Common myeloid progenitor, CD34-positive (primary cell): ENCODE measurements at regions of chr17 and their contacts with region 1.

Region 1: GRCh38 chr17:29640413-29640812 is 17.7 kb upstream of the CORO6 start:
- DNase-seq: peak in 2 of 3 donors; percentile 32 to 51
- H3K4me3 ChIP-seq: no peak overlapping the region
- H3K27ac ChIP-seq: peak overlapping the region in 1 of 2 experiments; percentile 57
- H3K4me1 ChIP-seq: peaks cover 14 to 50% (median 44%) of the 10 kb centered on the region in 4 experiments
- H3K27me3 ChIP-seq: no peaks in the 10 kb centered on the region

Region 2: GRCh38 chr17:29653995-29654714 is 13.7 kb after region 1 on chr17:
- CTCF ChIA-PET with region 1: interaction called, 30 read pairs
- POLR2A ChIA-PET with region 1: no interaction called
- DNase-seq: no peak
- H3K4me3 ChIP-seq: no peak overlapping the region
- H3K27ac ChIP-seq: no peak overlapping the region
- H3K4me1 ChIP-seq: peaks cover 0 to 2% (median 0%) of the 10 kb centered on the region in 4 experiments
- H3K27me3 ChIP-seq: no peaks in the 10 kb centered on the region

Region 3: DNA sequence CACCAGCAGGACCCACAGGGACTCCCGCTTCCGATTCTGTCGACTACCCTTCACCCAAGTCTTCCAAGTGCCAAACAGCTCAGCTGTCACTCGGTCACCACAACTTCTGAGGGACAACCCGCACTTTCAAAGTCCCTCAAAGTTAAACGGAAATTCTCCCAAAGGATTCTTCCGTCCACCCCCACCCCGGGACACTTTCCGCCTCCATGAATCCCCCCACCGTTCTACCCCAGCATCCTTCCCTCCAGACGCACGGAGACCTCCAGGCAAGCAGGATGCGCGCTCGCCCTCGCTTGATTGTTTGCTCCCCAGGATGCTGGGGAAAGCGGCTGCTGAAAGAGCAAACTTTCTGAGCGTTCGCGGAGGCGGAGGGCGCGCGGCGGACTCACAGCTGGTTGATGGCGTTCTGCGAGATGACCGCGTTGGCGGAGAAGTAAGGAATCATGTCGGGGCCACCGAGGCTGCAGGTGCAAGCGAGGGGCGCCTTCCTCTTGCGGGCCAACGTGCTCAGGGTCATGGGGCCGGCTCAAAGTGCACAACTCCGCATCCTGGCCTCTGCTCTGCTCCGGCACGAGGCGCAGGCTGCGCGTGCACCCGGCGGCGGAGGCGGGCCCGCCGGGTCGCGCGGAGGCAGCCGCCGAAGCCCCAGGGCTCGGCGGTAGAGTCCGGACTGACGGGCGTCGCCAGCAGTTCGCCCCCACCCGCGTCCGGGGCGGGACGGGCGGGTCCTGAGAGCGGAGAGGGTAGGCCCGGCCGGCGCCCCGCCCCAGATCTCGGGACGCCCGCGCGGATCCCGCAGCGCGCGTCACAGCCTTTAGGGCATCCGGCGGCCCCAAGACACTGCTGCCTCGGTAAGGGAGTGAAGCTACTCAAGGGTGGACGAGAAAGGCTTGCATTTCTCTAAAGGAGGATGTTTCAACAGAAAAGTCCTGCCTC is 120.6 kb after region 1 on chr17:
- CTCF ChIA-PET with region 1: interaction called, 15 read pairs
- POLR2A ChIA-PET with region 1: no interaction called
- DNase-seq: peak; percentile 89 to 96 (median 95)
- H3K4me3 ChIP-seq: peak overlapping the region; percentile 73 to 95 (median 79)
- H3K27ac ChIP-seq: peak overlapping the region; percentile 15 to 73
- H3K4me1 ChIP-seq: peaks cover 16 to 47% (median 23%) of the 10 kb centered on the region in 4 experiments
- H3K27me3 ChIP-seq: no peaks in the 10 kb centered on the region

Region 4: DNA sequence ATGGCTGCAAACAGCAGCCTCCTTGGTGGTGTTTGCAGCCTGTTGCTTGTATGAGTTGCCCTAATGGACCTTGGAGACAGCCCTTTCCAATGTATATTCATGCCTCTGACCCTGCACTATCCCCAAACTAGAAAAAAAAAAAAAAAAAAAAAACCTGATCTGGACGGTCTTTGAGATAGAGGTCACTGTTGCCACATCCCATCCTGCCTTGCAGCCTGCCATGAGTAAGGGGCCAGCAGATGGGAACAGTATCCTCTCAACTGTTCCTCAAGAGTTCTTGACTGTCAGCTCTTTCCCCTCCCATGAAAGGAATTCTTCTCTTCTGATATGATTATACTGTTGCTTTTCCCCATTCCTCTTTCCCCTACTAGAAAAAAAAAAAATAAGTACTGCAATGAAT is 137.2 kb after region 1 on chr17:
- CTCF ChIA-PET with region 1: interaction called, 91 read pairs
- POLR2A ChIA-PET with region 1: interaction called, 4 read pairs
- DNase-seq: no peak
- H3K4me3 ChIP-seq: no peak overlapping the region
- H3K27ac ChIP-seq: no peak overlapping the region
- H3K4me1 ChIP-seq: peaks cover 0 to 6% (median 3%) of the 10 kb centered on the region in 4 experiments
- H3K27me3 ChIP-seq: no peaks in the 10 kb centered on the region

Region 5: DNA sequence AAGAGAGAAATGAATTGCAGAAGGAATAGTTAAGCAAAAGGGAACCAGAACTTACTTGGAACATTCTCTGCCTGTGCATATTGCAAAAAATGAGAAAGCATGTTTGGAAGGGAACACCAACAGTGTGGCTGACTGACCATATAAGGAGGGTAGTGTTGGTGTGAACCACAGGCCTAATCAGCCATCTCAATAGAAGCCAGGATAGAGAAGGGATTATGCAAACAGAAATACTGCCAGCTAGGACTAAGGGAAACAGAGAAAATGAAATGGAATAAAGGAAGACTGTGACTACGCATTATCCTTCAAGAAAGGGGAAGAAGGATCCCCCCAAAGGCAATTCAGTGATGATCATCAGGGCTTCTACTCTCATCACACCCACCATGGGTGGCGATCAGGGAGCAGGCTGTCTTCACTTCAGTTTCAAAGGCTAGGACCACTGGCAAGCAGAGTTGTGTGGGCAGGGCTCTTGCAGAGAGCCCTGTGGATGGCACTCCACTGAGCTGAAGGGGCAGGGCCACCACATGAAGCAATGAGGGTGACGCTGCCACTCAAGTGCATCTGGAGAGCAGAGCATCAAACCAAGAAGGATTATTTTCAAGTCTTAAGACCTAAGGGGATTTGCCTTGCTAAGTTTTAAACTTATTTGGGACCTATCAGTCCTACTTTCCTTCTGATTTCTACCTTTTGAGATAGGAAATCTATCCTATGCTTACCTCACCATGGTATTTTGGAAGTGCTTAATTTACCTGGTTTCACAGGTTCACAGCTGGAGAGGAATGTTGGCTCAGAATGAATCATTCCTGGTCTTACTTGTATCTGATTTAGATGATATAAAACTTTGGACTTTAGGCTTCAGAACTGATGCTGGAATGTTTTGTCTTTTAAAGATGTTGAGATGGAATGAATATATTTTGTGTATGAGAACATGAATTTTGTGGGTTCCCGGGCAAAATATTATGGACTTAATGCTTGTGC is 149.1 kb after region 1 on chr17:
- CTCF ChIA-PET with region 1: interaction called, 10 read pairs
- POLR2A ChIA-PET with region 1: no interaction called
- DNase-seq: no peak
- H3K4me3 ChIP-seq: no peak overlapping the region
- H3K27ac ChIP-seq: no peak overlapping the region
- H3K4me1 ChIP-seq: peaks cover 0 to 7% (median 1%) of the 10 kb centered on the region in 4 experiments
- H3K27me3 ChIP-seq: no peaks in the 10 kb centered on the region

Region 6: DNA sequence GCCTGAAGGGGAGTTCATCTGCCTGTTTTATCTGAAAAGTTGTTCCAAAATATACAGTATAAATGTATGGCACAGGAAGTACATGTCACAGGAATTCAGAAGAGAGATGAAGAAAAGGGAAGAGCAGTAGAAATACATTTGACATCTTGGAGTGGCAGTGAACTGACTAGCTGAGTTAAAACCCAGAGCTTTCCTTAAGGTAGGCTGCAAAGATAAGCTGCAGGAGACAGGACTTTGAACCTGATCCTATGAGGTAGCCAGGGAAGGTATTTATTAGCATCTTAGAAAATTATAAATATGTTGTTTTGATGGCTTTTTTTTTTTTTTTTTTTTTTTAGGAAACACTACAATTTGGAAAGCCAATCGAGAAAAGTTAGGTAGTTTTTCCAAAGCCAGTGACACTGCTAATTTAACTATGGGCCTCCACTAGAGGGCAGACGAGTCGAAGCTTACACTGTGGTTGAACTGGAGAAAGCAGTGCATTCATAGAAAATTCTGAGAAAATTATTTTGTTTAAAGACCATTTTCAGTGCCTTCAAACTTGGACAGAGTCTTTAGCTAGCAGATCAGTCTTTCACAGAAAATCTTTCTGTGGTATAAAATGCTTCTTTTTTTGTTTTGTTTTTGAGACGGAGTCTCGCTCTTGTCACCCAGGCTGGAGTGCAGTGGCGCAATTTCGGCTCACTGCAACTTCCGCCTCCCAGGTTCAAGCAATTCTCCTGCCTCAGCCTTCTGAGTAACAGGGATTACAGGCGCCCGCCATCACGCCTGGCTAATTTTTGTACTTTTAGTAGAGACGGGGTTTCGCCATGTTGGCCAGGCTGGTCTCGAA is 167.3 kb after region 1 on chr17:
- CTCF ChIA-PET with region 1: interaction called, 13 read pairs
- POLR2A ChIA-PET with region 1: no interaction called
- DNase-seq: peak; percentile 65 to 82 (median 78)
- H3K4me3 ChIP-seq: no peak overlapping the region
- H3K27ac ChIP-seq: no peak overlapping the region
- H3K4me1 ChIP-seq: peaks cover 0 to 7% (median 3%) of the 10 kb centered on the region in 4 experiments
- H3K27me3 ChIP-seq: no peaks in the 10 kb centered on the region

Region 7: DNA sequence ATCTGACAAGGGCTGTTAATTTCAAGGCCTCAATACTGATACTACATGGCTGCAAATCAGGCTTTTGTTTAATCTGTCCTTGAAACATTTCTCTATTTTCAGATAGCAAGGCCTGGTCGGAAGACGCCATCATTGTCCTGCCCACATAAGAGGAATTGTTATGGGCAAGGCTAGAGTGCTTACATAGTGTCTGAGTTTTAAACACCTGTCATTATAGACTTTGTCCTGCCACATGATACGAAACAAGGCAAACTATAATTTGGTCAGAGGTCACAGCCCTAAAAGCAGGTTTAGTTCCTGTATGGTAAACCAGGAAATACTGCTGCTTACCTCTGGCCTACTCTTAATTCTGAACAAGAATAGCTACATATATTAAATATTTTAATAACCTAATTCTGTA is 185.2 kb after region 1 on chr17:
- CTCF ChIA-PET with region 1: no interaction called
- POLR2A ChIA-PET with region 1: no interaction called
- DNase-seq: no peak
- H3K4me3 ChIP-seq: no peak overlapping the region
- H3K27ac ChIP-seq: no peak overlapping the region
- H3K4me1 ChIP-seq: no peaks in the 10 kb centered on the region
- H3K27me3 ChIP-seq: no peaks in the 10 kb centered on the region